ENCODE measurements at regions of chr3 and their contacts with region 1.

Region 1: DNA sequence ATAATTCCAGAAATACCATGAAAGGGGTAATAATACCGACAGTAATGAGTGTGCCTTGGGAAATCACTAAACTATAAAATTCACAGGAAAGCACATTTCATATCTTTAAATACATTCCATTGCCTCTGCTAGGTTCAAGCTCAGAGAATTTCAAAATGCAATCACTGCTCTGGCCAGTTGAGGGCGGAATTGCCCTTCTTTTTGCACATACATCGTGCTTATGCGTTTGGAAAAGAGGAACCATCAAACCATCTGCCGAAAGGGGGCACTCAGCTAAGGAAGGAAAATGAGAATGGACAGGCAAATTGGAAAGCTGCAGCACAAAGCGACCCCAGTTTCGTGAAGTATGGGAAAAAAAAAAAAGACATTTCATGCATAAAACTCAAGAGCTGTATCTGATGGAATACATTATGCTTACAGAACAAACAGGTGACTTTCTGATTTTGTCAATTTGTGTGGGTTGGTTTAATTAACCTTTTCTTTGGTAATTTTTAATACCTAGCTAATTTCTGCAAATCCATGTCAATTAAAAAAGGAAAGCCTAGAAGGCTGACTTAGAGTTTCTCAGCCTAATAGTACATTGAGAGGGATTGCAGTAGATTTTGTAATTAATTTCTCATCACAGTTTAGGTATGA is 61.4 kb downstream of the TUSC7 start:
- DNase-seq: peak in 1 of 2 donors; percentile 77
- H3K4me3 ChIP-seq: no peak overlapping the region
- H3K27ac ChIP-seq: no peak overlapping the region
- H3K4me1 ChIP-seq: no peaks in the 10 kb centered on the region
- H3K27me3 ChIP-seq: no peaks in the 10 kb centered on the region
- CTCF ChIP-seq: peak; percentile 50 to 88 (median 75)

Region 2: GRCh38 chr3:116734243-116734642 is 36.7 kb before region 1 on chr3:
- intact Hi-C with region 1: no loop called
- DNase-seq: no peak
- H3K4me3 ChIP-seq: no peak overlapping the region
- H3K27ac ChIP-seq: no peak overlapping the region
- H3K4me1 ChIP-seq: no peaks in the 10 kb centered on the region
- H3K27me3 ChIP-seq: no peaks in the 10 kb centered on the region
- CTCF ChIP-seq: no peak

Region 3: GRCh38 chr3:117526470-117527079 is 755.6 kb after region 1 on chr3:
- intact Hi-C with region 1: loop called (anchors 10 kb)
- DNase-seq: no peak
- H3K4me3 ChIP-seq: no peak overlapping the region
- H3K27ac ChIP-seq: no peak overlapping the region
- H3K4me1 ChIP-seq: no peaks in the 10 kb centered on the region
- H3K27me3 ChIP-seq: no peaks in the 10 kb centered on the region
- CTCF ChIP-seq: peak; percentile 16 to 60 (median 46)

Region 4: DNA sequence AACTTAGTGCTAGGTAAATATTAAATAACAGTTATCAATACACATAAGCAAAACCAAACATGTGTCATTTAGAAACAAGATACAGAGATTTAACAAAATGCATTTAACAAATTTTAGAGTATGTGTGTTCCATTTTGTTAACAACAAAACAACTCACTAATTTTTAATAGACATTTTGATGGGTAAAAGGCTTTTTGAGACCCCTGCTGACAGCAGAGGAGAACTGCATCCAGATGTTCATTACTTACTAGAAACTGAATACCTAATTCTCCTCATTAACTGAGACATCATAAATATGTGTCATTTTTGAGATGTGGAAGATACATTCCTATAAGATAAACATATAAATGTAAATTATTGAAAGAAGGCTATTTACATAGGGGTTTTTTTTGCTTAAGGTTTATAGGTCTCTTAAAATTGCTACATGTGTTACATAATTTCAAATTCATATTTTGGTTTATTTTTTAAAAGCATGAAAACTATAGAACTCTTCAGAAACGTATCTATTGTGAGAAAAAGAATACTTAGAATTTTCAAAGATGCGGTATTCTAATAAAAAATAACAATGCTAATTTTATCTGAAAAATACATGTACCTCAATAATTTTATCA is 948.5 kb after region 1 on chr3:
- intact Hi-C with region 1: loop called (anchors 2 kb)
- DNase-seq: no peak
- H3K4me3 ChIP-seq: no peak overlapping the region
- H3K27ac ChIP-seq: no peak overlapping the region
- H3K4me1 ChIP-seq: no peaks in the 10 kb centered on the region
- H3K27me3 ChIP-seq: no peaks in the 10 kb centered on the region
- CTCF ChIP-seq: peak in 2 of 3 experiments; percentile 59 to 67